HEK293 (cell line): ENCODE measurements at regions of chrX and their contacts with region 1.

Region 1: GRCh38 chrX:149871940-149872339 is 9.0 kb upstream of the MAGEA8 start:
- H3K4me3 ChIP-seq: no peak overlapping the region
- H3K27ac ChIP-seq: no peak overlapping the region
- H3K4me1 ChIP-seq: no peaks in the 10 kb centered on the region
- CTCF ChIP-seq: peak; percentile 47; the same call in 1 of the 2 replicates

Region 2: DNA sequence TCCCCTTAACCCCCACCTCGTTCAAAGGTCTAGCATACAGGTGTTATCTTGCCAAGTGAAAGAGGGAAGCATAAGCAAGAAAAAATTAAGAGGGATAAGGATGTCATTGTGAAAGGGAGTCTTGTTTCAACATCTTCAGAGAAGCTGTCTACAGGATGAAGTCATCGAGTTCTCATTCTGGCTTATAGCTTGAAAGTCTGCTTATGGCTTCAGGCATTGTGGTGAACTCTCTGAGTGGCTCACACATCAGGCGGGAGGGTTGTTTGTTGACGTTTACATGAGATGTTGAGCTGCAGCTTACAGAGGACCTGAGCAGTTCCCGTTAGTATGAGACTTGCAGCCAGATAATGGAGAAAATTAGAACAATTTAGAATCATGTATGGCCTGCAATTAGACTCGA is 301.3 kb before region 1 on chrX:
- CTCF ChIA-PET with region 1: no interaction called
- POLR2A ChIA-PET with region 1: no interaction called
- H3K4me3 ChIP-seq: no peak overlapping the region
- H3K27ac ChIP-seq: no peak overlapping the region
- H3K4me1 ChIP-seq: peaks cover 16% of the 10 kb centered on the region
- CTCF ChIP-seq: no peak

Region 3: DNA sequence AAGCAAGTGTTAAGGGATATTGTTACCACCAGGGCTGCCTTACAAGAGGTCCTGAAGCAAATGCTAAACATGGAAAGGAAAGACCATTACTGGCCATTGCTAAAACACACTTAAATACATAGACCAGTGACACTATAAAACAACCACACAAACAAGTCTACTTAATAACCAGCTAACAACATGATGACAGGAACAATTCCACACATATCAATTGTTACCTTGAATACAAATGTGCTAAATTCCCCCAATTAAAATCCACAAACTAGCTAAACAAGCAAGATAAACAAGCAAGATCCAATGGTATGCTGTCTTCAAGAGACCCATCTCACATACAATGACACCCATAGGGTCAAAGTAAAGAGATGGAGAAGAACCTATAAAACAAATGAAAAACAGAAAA is 11.5 kb before region 1 on chrX:
- CTCF ChIA-PET with region 1: interaction called, 25 read pairs
- POLR2A ChIA-PET with region 1: no interaction called
- H3K4me3 ChIP-seq: no peak overlapping the region
- H3K27ac ChIP-seq: no peak overlapping the region
- H3K4me1 ChIP-seq: peaks cover 3% of the 10 kb centered on the region; the same call in 1 of the 2 replicates
- CTCF ChIP-seq: no peak